Activated T-helper 2 cell treated with anti-CD3 and anti-CD28 coated beads, Interferon-gamma antibody, Interleukin-2, Interleukin-4, amounts not matched to agents 10 μg/mL and 5 μg/mL and 100 μg/mL, durations not matched to agents 14 hours and 24 hours and 36 hours (primary cell): ENCODE measurements at regions of chr17 and their contacts with region 1.

Region 1: DNA sequence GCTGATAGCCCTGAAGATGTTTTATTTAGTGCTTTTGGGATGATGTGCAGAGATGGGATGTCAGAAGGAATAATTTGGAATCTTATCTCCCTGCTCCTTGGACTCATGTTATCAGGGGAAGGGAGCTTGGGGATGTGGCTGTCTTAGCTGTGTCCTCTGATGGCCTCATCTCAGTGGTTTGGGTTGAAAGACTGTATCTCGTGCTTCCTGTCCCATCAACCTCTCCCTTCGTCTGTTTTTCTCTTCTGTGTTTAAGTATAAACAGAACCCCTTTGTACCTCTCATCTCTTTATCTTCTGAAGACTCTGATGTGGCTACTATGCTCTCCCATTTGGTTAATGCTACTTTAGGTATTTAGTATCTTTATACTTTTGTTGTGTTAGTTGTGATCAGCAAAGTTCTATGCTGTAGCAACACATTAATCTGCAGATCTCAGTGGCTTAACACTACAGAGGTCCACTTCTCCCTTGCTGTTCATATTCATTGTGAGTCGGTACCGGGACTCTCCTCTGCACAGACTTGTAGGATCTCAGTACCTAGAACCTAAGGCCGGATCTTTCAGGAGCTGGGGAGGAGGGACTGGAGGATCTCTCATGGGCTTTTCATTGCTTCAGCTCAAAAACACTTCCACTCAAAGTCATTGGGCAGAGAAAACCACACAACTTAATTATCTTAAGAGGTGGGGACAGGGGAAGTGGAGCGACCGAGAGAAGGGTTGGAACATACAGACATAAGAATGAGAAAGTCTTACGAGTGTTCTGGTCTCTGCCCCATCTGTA is 28.8 kb downstream of the PRKCA start:
- DNase-seq: peak; percentile 29
- H3K4me3 Mint-ChIP-seq: peak overlapping the region; percentile 69
- H3K27ac Mint-ChIP-seq: peak overlapping the region; percentile 96
- H3K4me1 Mint-ChIP-seq: peaks cover 73% of the 10 kb centered on the region
- H3K27me3 Mint-ChIP-seq: no peaks in the 10 kb centered on the region

Region 2: DNA sequence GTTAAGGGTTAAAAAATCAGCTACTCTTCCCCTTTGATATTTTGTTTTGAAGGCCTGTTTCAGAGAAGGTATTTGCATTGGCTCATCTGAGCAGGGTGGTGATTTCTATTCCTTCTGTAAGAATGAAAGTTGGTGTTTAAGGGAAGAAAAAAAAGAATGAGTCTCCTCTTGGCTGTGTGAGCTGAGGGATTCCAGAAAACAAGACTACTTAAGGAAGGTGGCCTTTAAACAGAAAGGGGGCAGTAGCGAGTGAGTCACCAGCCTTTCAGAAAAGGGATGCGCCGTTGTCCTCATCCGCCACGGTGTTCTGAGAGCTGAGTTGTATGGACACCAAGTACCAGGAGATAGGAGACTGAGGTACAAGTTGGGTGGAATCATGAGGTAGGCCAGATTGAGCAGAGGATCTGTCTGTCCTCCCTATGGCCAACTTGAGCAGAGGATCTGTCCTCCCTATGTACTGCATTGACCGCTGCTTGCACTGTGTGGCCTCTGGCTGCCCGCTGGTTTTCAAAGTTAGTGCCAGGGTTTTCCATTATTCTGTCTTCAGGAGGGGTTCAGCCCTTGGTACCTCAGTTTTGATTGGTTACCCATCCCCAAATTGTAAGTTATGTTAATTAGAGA is 20.6 kb before region 1 on chr17:
- intact Hi-C with region 1: loop called (anchors 1 kb)
- DNase-seq: no peak
- H3K4me3 Mint-ChIP-seq: peak overlapping the region; percentile 71
- H3K27ac Mint-ChIP-seq: peak overlapping the region; percentile 92
- H3K4me1 Mint-ChIP-seq: peaks cover 84% of the 10 kb centered on the region
- H3K27me3 Mint-ChIP-seq: no peaks in the 10 kb centered on the region

Region 3: DNA sequence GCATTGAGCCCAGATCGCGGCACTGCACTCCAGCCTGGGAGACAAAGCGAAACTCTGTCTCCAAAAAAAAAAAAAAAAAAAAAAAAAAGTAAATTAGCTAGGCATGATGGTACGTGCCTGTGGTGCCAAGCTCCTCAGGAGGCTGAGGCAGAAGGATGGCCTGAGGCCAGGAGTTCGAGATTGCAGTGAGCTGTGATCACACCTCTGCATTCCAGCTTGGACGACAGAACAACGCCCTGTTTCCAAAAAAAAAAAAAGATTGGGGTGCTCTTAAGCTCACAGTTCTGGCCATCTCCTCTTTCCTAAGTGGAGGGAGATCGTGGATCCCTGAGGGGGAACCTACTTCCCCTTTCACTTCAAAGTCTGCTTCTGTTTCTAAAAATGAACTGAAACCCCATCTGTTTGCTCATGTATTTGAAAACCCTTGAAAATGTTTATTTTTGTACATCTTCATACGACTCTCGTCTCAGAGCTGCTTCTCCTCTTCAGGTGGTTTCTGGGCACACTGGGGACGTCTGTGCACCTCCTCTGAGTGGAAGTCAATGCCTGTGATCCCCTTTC is 110.0 kb after region 1 on chr17:
- intact Hi-C with region 1: no loop called
- DNase-seq: no peak
- H3K4me3 Mint-ChIP-seq: no peak overlapping the region
- H3K27ac Mint-ChIP-seq: peak overlapping the region; percentile 4
- H3K4me1 Mint-ChIP-seq: peaks cover 31% of the 10 kb centered on the region
- H3K27me3 Mint-ChIP-seq: no peaks in the 10 kb centered on the region